Endothelial cell of umbilical vein (primary cell): ENCODE measurements at regions of chr11 and their contacts with region 1.

Region 1: DNA sequence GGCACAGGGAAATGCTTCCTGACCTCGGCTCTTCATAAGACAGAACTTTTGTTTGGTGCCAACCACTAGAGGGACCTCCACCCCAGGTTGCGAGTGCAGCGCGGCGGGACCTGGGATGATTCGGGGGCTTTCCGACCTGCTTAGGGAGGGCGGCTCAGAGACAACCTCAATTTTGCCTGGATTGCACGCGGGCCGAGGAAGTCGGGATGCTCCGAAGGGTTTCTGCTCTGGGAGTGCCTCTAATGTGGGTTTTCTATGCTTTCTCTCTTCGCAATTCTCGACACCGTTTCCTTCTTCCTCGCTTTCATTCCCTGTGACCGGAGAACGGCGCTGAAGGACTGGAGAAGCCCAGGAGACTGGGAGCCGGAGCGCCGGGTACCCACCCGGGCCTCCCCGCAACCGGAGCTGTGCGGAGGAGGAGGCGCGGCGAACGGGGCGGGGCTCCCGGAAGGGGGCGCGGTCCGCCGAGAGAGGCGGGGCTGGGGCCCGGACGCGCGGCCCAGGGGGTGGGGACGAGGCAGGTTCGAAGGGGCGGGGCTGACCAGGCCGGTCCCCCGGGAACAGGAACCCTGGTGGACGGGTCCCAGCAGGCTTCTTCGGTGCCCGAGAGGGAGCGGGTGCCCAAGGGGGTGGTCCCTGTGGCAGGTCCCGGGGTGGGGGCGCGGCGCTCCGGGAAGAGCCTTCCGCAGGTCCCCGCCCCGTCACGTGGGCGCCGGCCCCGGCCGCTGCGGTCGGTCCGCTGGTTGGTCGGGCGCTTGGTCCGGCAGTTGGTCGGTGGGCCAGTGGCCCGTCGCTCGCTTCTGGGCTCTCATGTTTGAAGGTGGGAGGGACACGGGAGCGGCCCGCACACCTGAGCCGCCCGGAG is at the start of gene PPFIBP2:
- DNase-seq: peak; percentile 63
- H3K4me3 ChIP-seq: peak within 1 kb of the TSS; percentile 43 to 65 (median 52)
- H3K27ac ChIP-seq: no peak within 1 kb of the TSS
- H3K4me1 ChIP-seq: peaks cover 6% of the 10 kb centered on the region
- H3K27me3 ChIP-seq: peaks cover 26 to 32% of the 10 kb centered on the region in 2 experiments
- CTCF ChIP-seq: peak; percentile 61 to 76
- POLR2A ChIP-seq: no peak
- total RNA-seq, gene PPFIBP2: 1.3 and 2.6 TPM in 2 replicates

Region 2: GRCh38 chr11:7143908-7144307 is 369.6 kb before region 1 on chr11:
- CTCF ChIA-PET with region 1: no interaction called
- POLR2A ChIA-PET with region 1: no interaction called
- dilution Hi-C with region 1: no loop called
- intact Hi-C with region 1: no loop called
- DNase-seq: peak; percentile 22
- H3K4me3 ChIP-seq: no peak overlapping the region
- H3K27ac ChIP-seq: no peak overlapping the region
- H3K4me1 ChIP-seq: no peaks in the 10 kb centered on the region
- H3K27me3 ChIP-seq: no peaks in the 10 kb centered on the region
- CTCF ChIP-seq: peak in 1 of 2 donors; percentile 14
- POLR2A ChIP-seq: no peak

Region 3: DNA sequence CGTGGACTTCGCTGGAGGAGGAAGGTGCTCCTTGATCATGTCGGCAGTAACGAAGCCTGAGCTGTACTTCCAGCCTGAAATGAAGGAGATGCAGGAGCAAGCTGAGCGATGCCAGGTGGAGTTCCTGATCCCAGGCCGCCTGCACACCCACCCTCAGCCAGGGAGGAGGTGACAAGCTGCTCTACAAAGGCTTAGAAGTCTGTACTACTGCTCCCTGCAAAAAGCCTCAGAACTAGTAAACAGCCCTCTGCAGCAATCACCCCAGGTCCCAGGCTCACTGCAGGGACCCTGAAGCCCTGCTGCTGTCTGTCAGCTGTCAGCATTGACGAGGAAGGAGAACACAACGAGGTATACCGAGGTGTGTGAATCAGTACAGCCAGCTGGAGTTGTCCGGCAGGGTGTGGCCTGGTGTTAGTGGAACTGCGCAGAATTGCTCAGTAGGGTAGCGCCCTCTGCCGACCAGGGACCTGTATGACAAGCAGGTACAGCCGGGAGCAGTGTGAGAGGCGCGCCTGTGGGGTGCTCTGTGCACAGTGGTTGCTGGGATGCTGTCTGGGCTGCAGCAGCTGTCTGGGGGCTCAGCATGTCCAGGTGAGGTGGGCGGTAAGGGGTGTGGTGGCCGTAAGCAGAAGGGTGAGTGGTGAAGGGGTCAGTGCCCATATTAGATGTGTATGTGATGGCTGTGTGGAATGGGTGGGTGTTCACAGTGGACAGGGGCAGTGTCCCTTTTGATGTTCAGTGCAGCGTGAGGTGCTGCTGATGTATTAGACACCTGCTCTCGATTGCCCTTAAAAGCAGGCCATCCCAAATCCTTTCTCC is 152.2 kb after region 1 on chr11:
- CTCF ChIA-PET with region 1: interaction called, 27 read pairs
- POLR2A ChIA-PET with region 1: no interaction called
- dilution Hi-C with region 1: no loop called
- intact Hi-C with region 1: loop called (anchors 1 kb)
- DNase-seq: peak; percentile 69
- H3K4me3 ChIP-seq: no peak overlapping the region
- H3K27ac ChIP-seq: no peak overlapping the region
- H3K4me1 ChIP-seq: no peaks in the 10 kb centered on the region
- H3K27me3 ChIP-seq: no peaks in the 10 kb centered on the region
- CTCF ChIP-seq: peak; percentile 79 to 94
- POLR2A ChIP-seq: no peak

Region 4: DNA sequence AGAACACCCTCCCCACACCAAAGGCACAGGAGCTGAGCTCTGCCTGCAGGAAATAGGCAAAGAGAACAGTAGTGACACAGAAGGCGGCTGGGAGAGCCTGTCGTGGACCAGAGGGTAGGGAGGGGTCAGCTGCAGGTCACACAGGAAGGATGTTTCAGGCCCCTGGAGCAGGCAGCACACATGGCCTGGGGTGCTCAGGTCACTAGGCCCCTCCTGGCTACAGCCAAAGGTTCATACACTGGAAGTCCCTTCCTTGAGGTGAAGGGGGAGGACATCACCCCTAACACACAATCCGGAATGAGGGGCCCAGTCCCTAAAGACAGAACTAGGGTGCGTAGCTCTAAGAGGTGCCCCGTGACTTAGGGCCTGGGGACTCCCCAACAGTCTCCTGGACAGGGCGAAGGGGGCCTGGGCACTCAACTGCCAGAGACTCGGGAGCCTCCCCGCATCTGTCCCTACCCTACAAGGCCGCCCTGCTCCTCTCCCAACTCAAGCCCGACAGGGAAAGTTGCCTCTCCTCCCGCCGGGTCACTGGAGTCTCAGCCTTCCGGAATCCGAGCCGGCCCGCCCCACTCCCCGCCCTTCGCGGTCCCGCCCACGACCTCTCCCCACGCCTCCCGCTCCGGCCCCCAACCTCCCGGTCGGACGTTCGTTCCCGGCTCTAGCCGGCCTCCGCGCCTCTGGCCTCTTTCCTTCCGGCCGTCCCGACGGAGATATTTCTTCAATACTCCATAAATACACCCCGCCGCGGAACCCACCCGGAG is 159.7 kb after region 1 on chr11 and contains the start of gene CYB5R2:
- CTCF ChIA-PET with region 1: interaction called, 5 read pairs
- POLR2A ChIA-PET with region 1: no interaction called
- dilution Hi-C with region 1: no loop called
- intact Hi-C with region 1: loop called (anchors 1 kb)
- DNase-seq: peak; percentile 15
- H3K4me3 ChIP-seq: peak within 1 kb of the TSS; percentile 25 to 44 (median 32)
- H3K27ac ChIP-seq: no peak within 1 kb of the TSS
- H3K4me1 ChIP-seq: peaks cover 4% of the 10 kb centered on the region
- H3K27me3 ChIP-seq: peaks cover 0 to 4% of the 10 kb centered on the region in 2 experiments
- CTCF ChIP-seq: no peak
- POLR2A ChIP-seq: no peak
- total RNA-seq, gene CYB5R2: 4.2 and 4.8 TPM in 2 replicates

Region 5: DNA sequence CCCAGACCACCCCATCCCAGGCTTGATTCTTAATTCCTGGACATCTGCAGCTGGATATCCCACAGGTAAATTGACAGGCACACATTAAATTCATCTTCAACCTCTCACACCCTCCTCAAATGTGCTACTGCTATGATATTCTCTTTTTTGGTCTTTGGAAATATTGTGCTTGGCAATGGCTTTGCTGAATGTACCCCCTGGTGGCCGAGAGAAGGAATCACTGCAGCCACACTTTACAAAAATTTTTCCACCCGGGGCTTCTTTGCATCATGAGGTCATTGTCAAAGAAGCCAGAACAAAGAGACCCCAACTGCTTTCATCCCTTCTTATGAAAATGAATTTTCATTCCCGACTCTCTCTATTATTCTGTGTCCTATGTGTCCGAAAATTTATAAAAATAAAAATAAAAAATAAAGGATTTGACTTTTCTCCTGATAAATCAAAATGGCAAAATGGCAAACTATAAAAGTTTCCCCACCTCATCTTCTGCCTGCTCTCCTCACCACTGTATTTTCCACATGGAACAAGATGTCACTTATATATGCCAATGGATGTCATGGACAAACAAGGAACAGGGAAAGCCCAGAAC is 174.9 kb after region 1 on chr11:
- CTCF ChIA-PET with region 1: interaction called, 4 read pairs
- POLR2A ChIA-PET with region 1: interaction called, 3 read pairs
- dilution Hi-C with region 1: no loop called
- intact Hi-C with region 1: loop called (anchors 1 kb)
- DNase-seq: peak; percentile 36
- H3K4me3 ChIP-seq: no peak overlapping the region
- H3K27ac ChIP-seq: no peak overlapping the region
- H3K4me1 ChIP-seq: no peaks in the 10 kb centered on the region
- H3K27me3 ChIP-seq: peaks cover 46 to 50% of the 10 kb centered on the region in 2 experiments
- CTCF ChIP-seq: peak; percentile 72 to 77
- POLR2A ChIP-seq: no peak

Region 6: GRCh38 chr11:7694235-7694634 is 180.8 kb after region 1 on chr11:
- CTCF ChIA-PET with region 1: interaction called, 4 read pairs
- POLR2A ChIA-PET with region 1: no interaction called
- dilution Hi-C with region 1: no loop called
- intact Hi-C with region 1: loop called (anchors 1 kb)
- DNase-seq: no peak
- H3K4me3 ChIP-seq: no peak overlapping the region
- H3K27ac ChIP-seq: no peak overlapping the region
- H3K4me1 ChIP-seq: no peaks in the 10 kb centered on the region
- H3K27me3 ChIP-seq: peaks cover 37 to 40% of the 10 kb centered on the region in 2 experiments
- CTCF ChIP-seq: no peak
- POLR2A ChIP-seq: no peak